Lower leg skin (tissue), 4 donors: ENCODE measurements at regions of chr3 and their contacts with region 1.

Region 1: GRCh38 chr3:60954048-60954447 is 297.2 kb downstream of the FHIT start:
- DNase-seq: no peak
- H3K4me3 ChIP-seq: no peak overlapping the region
- CTCF ChIP-seq: no peak
- POLR2A ChIP-seq: no peak

Region 2: GRCh38 chr3:59957150-59957549 is 996.9 kb before region 1 on chr3:
- intact Hi-C with region 1: loop called (anchors 10 kb)
- DNase-seq: no peak
- H3K4me3 ChIP-seq: no peak overlapping the region
- CTCF ChIP-seq: no peak
- POLR2A ChIP-seq: no peak